Kidney (tissue), 22 donors: ENCODE measurements at regions of chr11 and their contacts with region 1.

Region 1: DNA sequence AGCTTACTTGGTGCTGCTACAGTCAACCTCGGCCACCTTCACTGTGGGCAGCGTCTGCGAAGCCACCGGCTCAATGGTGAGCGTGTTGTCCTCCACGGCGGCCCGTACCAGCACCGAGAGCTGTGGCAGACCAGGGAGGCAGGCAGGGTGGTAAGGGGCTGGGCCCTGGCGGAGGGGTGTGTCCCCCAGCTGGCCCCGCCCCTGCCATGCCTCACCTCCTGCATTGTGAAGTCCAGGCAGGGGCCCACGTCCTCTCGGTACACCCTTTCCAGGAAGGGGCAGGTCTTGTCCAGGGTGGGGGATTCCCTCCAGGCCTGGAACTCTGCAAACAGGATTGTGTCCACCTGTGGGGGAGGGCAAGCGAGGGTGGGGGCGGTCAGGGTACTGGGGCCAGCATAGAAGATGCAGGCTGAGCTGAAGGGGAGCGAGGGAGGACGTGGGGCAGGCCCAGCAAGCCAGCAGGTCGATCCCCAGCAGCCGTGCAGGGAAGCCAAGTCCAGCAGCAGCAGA is 12.8 kb downstream of the RAB3IL1 start:
- DNase-seq: peak; percentile 85 to 91 (median 88)
- H3K4me3 ChIP-seq: peak overlapping the region in 2 of 3 donors; percentile 55 to 68
- H3K27ac ChIP-seq: peak overlapping the region in 1 of 2 donors; percentile 54
- H3K4me1 ChIP-seq: peaks cover 0 to 19% (median 18%) of the 10 kb centered on the region in 3 donors
- H3K27me3 ChIP-seq: no peaks in the 10 kb centered on the region
- CTCF ChIP-seq: no peak

Region 2: GRCh38 chr11:61947486-61948210 is 43.1 kb after region 1 on chr11:
- intact Hi-C with region 1: loop called (anchors 5 kb)
- DNase-seq: peak; percentile 89 to 94 (median 91)
- H3K4me3 ChIP-seq: no peak overlapping the region
- H3K27ac ChIP-seq: no peak overlapping the region
- H3K4me1 ChIP-seq: peaks cover 0 to 7% (median 3%) of the 10 kb centered on the region in 3 donors
- H3K27me3 ChIP-seq: no peaks in the 10 kb centered on the region
- CTCF ChIP-seq: peak; percentile 97

Region 3: GRCh38 chr11:62461740-62462507 is 557.3 kb after region 1 on chr11:
- intact Hi-C with region 1: no loop called
- DNase-seq: no peak
- H3K4me3 ChIP-seq: no peak overlapping the region
- H3K27ac ChIP-seq: no peak overlapping the region
- H3K4me1 ChIP-seq: peaks cover 2 to 14% (median 6%) of the 10 kb centered on the region in 3 donors
- H3K27me3 ChIP-seq: no peaks in the 10 kb centered on the region
- CTCF ChIP-seq: no peak